Gastrocnemius medialis (tissue), 4 donors: ENCODE measurements at regions of chr3 and their contacts with region 1.

Region 1: GRCh38 chr3:16600780-16601539 is 4.3 kb downstream of the DAZL start:
- DNase-seq: peak; percentile 50 to 66
- ATAC-seq: peak; percentile 72 to 87
- H3K4me3 ChIP-seq: no peak overlapping the region
- H3K27ac ChIP-seq: no peak overlapping the region
- H3K4me1 ChIP-seq: peaks cover 0 to 5% of the 10 kb centered on the region in 2 donors
- H3K27me3 ChIP-seq: no peaks in the 10 kb centered on the region
- CTCF ChIP-seq: peak; percentile 79 to 92 (median 88)
- POLR2A ChIP-seq: no peak

Region 2: DNA sequence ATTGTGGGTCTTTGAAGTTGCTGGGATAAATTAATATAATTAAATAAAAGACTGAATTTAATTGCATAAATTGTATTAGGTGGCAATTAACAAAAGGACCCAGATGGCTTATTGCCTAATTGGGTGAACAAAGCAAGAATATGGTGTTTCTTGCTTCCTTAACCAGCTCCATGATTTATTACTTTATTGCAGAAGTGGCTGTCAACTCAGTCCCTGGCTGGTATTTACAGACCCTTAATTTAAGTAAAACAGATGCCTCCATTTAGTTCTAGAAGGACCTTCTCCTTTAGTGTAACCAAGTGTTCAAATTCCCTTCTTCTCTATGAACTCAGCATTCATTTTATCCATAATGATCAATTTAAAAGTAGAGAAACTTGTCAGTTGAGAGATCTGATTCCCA is 371.3 kb before region 1 on chr3:
- in situ Hi-C with region 1: no loop called
- intact Hi-C with region 1: no loop called
- DNase-seq: no peak
- ATAC-seq: no peak
- H3K4me3 ChIP-seq: no peak overlapping the region
- H3K27ac ChIP-seq: no peak overlapping the region
- H3K4me1 ChIP-seq: no peaks in the 10 kb centered on the region
- H3K27me3 ChIP-seq: no peaks in the 10 kb centered on the region
- CTCF ChIP-seq: no peak
- POLR2A ChIP-seq: no peak

Region 3: GRCh38 chr3:16433701-16434151 is 167.2 kb before region 1 on chr3:
- in situ Hi-C with region 1: no loop called
- intact Hi-C with region 1: no loop called
- DNase-seq: no peak
- ATAC-seq: no peak
- H3K4me3 ChIP-seq: no peak overlapping the region
- H3K27ac ChIP-seq: no peak overlapping the region
- H3K4me1 ChIP-seq: peaks cover 0 to 3% of the 10 kb centered on the region in 2 donors
- H3K27me3 ChIP-seq: no peaks in the 10 kb centered on the region
- CTCF ChIP-seq: no peak
- POLR2A ChIP-seq: no peak

Region 4: DNA sequence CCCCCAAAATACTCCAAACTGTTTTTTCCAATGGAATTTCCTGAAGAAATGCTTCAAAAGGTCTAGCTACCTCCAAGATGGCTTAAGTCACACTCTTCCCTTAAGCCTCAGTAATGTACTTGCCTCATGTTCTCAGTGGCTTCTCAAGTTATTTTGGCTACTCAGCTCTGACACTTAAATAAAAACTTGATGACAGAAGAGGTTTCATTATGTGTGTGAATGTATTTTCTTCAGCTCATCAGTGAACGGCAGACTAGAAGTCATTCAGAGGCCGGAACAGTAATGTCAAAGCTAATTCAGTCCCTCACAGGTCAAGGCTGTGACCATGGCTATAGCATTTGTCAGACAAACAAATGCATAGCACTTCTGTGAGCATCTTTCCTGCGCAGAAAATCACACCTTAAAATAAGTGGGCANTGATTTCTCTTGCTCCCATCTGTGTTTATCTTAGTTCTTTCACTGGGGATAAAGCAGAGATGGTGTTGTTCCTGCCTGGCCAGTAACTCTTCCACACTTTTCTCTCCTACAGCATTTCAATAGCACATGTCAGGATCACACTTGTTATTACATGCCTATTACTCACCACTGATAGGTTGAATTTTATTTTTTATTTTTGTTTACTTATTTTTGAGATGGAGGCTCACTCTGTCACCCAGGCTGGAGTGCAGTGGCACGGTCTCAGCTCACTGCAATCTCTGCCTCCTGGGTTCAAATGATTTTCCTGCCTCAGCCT is 215.3 kb after region 1 on chr3:
- in situ Hi-C with region 1: no loop called
- intact Hi-C with region 1: no loop called
- DNase-seq: no peak
- ATAC-seq: peak; percentile 75
- H3K4me3 ChIP-seq: no peak overlapping the region
- H3K27ac ChIP-seq: peak overlapping the region in 3 of 4 donors; percentile 10 to 24 (median 19)
- H3K4me1 ChIP-seq: peaks cover 0 to 7% of the 10 kb centered on the region in 2 donors
- H3K27me3 ChIP-seq: no peaks in the 10 kb centered on the region
- CTCF ChIP-seq: no peak
- POLR2A ChIP-seq: no peak

Region 5: DNA sequence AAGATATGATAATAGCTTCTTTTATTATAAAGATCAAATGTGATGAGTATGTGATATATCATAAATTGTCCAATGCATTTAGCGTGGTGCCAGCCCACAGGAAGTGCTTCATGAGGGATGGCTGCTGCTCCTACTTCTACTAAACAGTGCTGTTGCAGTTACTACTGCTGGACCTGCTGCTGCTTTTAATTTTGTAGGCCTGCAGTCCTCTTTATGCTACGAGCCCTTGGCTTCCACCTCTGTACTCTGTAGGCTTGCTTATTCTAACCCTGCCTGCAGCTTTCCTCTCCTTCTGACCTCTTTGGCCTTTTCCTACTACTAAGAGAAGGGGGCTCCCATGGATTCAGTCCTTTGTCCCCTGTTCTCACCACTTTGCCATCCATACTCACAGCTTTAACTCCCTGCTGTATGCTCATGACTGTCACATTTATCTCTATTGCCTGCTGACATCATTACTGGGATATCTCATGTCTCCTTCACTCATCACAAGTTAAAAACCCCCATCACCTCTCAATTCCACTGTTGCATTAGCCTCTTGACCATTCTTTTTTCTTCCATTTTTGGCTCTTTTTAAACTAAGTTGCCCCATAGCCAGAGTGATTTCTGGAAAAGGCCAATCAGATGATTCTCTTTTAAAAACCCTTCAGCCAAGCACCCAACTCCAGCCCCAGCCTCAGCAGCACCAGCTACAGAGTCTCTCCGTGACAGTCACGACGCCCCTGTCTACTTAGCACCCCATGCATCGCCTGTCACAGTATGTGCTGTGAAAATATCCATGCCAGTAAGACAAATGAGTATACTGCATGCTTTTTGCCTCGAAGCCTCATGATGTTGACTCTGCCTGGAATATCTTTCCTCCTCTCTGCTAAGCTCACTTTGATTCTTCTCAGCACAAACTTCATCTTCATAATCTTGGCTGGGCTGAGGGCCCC is 340.1 kb after region 1 on chr3:
- in situ Hi-C with region 1: no loop called
- intact Hi-C with region 1: loop called (anchors 5 kb)
- DNase-seq: no peak
- ATAC-seq: peak; percentile 45 to 55
- H3K4me3 ChIP-seq: no peak overlapping the region
- H3K27ac ChIP-seq: peak overlapping the region; percentile 7 to 54 (median 24)
- H3K4me1 ChIP-seq: peaks cover 57 to 70% of the 10 kb centered on the region in 2 donors
- H3K27me3 ChIP-seq: no peaks in the 10 kb centered on the region
- CTCF ChIP-seq: no peak
- POLR2A ChIP-seq: no peak

Region 6: DNA sequence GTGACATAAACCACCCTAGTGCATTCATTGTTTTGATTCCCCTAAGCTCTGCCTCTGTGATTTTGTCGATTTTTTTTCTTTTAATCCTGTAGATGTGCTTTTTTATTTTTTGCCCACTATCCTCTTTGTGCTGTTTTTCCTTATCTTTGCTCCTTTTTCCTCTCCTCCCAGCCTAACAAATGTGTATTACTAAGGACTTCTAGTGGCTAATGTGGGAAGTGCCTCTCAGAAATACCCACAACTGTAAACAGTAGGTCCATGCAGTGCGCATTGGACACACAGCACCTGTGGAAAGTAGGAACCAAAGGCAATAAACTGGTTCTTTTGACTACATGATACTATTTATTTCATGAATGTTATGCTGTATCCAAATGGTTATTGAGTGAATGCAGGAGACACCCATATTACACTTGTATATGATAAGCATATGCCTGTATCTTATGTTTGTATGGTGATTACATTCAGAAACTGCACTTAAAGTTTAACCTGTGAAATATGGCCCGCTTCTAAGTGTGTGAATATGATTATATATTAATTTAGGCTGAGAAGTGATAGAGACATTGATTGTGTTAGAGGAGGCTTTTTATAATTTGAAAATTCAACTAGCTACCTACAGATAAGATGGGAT is 431.6 kb after region 1 on chr3:
- in situ Hi-C with region 1: loop called in 3 of 4 experiments (anchors 10 to 25 kb)
- intact Hi-C with region 1: loop called (anchors 2 kb)
- DNase-seq: no peak
- ATAC-seq: peak; percentile 61 to 65
- H3K4me3 ChIP-seq: no peak overlapping the region
- H3K27ac ChIP-seq: peak overlapping the region in 3 of 4 donors; percentile 3 to 48 (median 32)
- H3K4me1 ChIP-seq: peaks cover 15 to 16% of the 10 kb centered on the region in 2 donors
- H3K27me3 ChIP-seq: no peaks in the 10 kb centered on the region
- CTCF ChIP-seq: peak; percentile 56 to 76 (median 61)
- POLR2A ChIP-seq: no peak